ENCODE measurements at regions of chr1 and their contacts with region 1.

Region 1: GRCh38 chr1:203340112-203340804 is 10.7 kb downstream of the FMOD start:
- DNase-seq: peak; percentile 61 to 68 (median 63)
- H3K4me3 ChIP-seq: no peak overlapping the region
- H3K4me3 Mint-ChIP-seq: peak overlapping the region in 1 of 8 donors; percentile 6
- H3K27ac ChIP-seq: no peak overlapping the region
- H3K27ac Mint-ChIP-seq: peak overlapping the region in 6 of 7 donors; percentile 1 to 78 (median 48)
- H3K4me1 ChIP-seq: peaks cover 16% of the 10 kb centered on the region
- H3K4me1 Mint-ChIP-seq: peaks cover 23 to 36% (median 28%) of the 10 kb centered on the region in 4 donors
- H3K27me3 ChIP-seq: peaks cover 8% of the 10 kb centered on the region
- H3K27me3 Mint-ChIP-seq: peaks cover 4 to 26% of the 10 kb centered on the region in 2 donors

Region 2: DNA sequence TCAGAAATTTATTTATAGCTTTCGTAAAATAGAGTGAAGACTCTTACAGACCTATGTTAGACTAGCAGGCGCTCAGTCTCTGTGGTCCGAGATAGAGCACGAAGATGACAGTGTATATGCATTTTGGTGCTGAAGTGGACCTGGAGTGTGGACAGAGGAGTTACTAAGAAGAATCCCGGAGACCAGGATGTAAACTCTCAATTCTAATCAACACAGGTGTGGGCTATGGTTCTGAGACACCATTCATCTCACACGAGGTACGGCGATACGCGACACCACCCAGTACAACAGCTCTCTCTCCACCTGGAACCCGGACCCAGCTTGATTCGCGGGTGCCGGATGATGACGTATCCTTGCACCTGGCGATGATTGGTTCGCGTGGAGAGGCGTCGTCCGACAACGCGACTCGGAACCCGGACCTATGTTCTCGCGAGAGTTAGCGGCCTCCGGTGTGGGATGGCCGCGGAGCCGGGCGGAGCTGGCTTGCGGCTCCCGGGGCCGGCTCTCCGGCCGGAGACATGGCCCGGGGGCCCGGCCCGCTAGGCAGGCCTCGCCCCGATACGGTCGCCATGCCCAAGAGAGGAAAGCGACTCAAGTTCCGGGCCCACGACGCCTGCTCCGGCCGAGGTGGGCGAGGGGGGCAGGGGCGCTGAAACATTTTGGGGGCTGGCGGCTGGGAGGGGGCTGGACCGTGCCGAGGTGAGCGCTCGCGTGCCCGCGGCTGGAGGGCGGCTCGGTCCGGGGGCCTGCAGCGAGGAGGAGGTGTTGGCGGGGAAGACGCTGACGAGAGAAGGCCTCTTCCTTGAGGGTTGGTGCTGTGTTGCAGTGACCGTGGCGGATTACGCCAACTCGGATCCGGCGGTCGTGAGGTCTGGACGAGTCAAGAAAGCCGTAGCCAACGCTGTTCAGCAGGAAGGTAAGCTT is 333.0 kb before region 1 on chr1 and contains the start of gene TMEM183A:
- CTCF ChIA-PET with region 1: no interaction called
- POLR2A ChIA-PET with region 1: no interaction called
- intact Hi-C with region 1: no loop called
- DNase-seq: peak; percentile 92 to 96 (median 93)
- H3K4me3 ChIP-seq: peak within 1 kb of the TSS; percentile 75 to 97
- H3K4me3 Mint-ChIP-seq: peak within 1 kb of the TSS; percentile 91 to 99 (median 94)
- H3K27ac ChIP-seq: peak within 1 kb of the TSS; percentile 93
- H3K27ac Mint-ChIP-seq: peak within 1 kb of the TSS; percentile 97 to 99 (median 98)
- H3K4me1 ChIP-seq: peaks cover 32% of the 10 kb centered on the region
- H3K4me1 Mint-ChIP-seq: peaks cover 18 to 46% (median 33%) of the 10 kb centered on the region in 4 donors
- H3K27me3 ChIP-seq: no peaks in the 10 kb centered on the region
- H3K27me3 Mint-ChIP-seq: no peaks in the 10 kb centered on the region
- total RNA-seq, gene TMEM183A: 69.3 to 70.3 TPM

Region 3: DNA sequence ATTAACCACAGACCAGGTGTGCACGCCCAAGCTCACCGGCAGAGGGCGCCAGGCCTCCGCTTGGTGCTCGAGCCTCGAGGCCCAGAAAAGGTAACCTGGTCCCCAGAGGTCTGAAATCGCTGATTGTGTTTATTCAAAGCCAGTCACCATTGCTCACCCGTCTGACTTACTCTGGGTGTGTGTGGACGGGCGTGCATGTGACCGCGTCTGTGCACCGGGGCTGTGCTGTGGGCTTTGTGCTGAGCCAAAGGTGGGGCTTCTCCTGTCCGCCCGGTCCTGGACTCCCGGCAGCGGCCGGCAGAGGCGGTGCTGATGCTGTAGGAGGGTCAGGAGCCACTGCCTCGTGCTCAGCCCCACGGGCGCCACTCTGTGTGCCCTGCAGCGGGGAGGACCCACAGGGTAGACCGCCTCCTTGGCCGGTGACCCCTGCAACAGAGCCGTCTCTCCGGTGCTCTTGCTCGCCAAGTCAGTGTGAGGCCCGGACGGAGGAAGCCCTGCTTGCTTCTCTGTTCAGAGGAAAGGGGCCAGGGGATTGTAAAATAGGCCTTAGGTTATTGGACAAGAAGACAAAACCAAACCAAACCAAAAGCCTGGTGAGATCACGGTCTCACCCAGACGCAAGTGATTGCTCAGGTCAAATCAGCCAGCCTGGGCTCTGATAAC is 66.9 kb before region 1 on chr1:
- CTCF ChIA-PET with region 1: interaction called, 921 read pairs
- POLR2A ChIA-PET with region 1: interaction called, 145 read pairs
- intact Hi-C with region 1: loop called (anchors 1 kb)
- DNase-seq: peak; percentile 88 to 91 (median 89)
- H3K4me3 ChIP-seq: peak overlapping the region in 1 of 2 donors; percentile 27
- H3K4me3 Mint-ChIP-seq: peak overlapping the region; percentile 39 to 74 (median 66)
- H3K27ac ChIP-seq: peak overlapping the region; percentile 46
- H3K27ac Mint-ChIP-seq: peak overlapping the region; percentile 40 to 94 (median 86)
- H3K4me1 ChIP-seq: peaks cover 62% of the 10 kb centered on the region
- H3K4me1 Mint-ChIP-seq: peaks cover 22 to 60% (median 44%) of the 10 kb centered on the region in 4 donors
- H3K27me3 ChIP-seq: no peaks in the 10 kb centered on the region
- H3K27me3 Mint-ChIP-seq: no peaks in the 10 kb centered on the region

Region 4: DNA sequence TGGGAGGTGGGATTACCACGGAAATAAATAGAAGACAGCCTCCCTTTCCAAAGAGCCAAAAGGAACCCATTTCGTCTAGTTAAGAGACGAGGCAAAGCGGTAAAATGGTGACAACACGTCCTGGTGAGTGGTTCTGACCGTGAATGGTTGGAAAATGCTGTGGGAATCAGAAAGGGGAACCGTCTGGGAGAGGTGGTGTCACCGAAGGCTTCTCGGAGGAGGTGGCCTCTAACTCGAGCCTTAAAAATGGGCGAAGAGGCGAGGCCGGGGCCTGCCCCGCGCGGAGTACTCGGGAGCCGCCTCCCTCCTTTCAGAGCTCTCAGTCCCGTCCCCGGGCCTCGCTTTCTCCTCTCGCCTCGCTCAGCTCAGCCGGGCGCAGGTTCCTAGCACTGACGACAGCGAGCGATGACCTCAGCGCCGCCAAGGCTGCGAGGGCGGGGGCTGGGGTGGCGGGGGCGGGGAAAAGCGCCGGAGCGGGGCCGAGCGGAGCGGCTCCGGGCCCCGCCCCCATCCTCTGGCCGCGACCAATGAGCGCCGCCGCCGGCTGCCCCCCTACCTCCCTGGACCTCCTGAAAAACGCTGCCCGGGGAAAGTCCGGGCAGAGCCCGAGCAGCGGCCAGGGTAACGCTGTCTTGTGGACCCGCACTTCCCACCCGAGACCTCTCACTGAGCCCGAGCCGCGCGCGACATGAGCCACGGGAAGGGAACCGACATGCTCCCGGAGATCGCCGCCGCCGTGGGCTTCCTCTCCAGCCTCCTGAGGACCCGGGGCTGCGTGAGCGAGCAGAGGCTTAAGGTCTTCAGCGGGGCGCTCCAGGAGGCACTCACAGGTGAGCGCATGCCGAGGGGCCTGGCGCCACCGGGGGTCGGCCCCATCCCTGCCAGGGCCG is 35.1 kb before region 1 on chr1 and contains the start of gene BTG2:
- CTCF ChIA-PET with region 1: interaction called, 243 read pairs
- POLR2A ChIA-PET with region 1: interaction called, 3 read pairs
- intact Hi-C with region 1: loop called (anchors 1 kb)
- DNase-seq: peak; percentile 90 to 94 (median 91)
- H3K4me3 ChIP-seq: peak within 1 kb of the TSS; percentile 87 to 95
- H3K4me3 Mint-ChIP-seq: peak within 1 kb of the TSS; percentile 90 to 99 (median 98)
- H3K27ac ChIP-seq: peak within 1 kb of the TSS; percentile 100
- H3K27ac Mint-ChIP-seq: peak within 1 kb of the TSS; percentile 97 to 100 (median 99)
- H3K4me1 ChIP-seq: peaks cover 50% of the 10 kb centered on the region
- H3K4me1 Mint-ChIP-seq: peaks cover 48 to 82% (median 57%) of the 10 kb centered on the region in 4 donors
- H3K27me3 ChIP-seq: no peaks in the 10 kb centered on the region
- H3K27me3 Mint-ChIP-seq: no peaks in the 10 kb centered on the region
- total RNA-seq, gene BTG2: 197 to 201 TPM

Region 5: DNA sequence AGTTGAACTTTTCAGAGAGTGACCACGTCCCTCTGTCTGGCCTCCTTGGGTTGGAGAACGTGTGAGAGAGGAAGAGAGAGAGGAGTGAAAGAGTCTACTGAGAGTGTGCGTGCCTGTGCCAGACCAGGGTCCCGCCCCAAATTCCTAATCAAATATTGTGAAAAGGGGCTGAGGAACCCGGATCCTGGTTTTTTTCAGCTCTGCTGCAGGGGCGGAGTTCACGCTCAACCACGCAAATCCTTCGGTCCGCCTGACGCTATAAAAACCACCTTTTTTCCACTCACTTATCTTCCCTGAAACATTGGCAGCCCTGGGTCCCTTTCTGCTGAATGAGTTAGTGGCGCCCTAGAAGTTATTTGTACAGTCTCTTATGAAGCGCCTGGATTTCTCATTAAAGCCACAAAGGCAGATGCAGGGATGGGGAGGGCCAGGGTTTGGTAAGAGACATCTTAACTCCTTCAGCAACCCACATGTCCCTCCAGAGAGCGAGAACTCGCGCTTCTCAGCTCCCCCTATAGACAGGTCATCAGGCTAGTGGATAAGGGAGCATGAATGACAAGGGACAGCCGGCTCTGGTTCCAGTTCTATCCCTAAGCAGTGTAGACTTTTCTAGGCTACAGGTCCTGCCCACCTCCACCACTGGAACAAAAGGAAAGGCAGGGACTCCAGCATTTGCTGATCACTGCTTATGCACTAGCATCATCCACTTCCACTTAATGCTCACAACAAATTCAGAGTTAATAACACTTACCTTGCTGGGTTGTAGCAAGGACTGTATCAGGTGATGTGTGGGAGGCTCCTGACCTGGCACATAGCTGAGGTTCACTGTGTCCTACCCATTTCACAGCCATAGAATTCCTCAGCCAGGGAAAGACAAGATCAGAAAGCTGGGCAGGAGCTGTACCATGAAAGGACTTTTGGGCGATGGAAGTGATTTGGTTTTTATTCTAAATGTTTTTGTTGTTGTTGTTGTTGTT is 11.1 kb after region 1 on chr1 and contains the start of gene FMOD:
- CTCF ChIA-PET with region 1: interaction called, 30 read pairs
- POLR2A ChIA-PET with region 1: no interaction called
- intact Hi-C with region 1: no loop called
- DNase-seq: no peak
- H3K4me3 ChIP-seq: no peak within 1 kb of the TSS
- H3K4me3 Mint-ChIP-seq: peak within 1 kb of the TSS in 5 of 8 donors; percentile 13 to 45 (median 31)
- H3K27ac ChIP-seq: no peak within 1 kb of the TSS
- H3K27ac Mint-ChIP-seq: peak within 1 kb of the TSS in 1 of 7 donors; percentile 57
- H3K4me1 ChIP-seq: no peaks in the 10 kb centered on the region
- H3K4me1 Mint-ChIP-seq: peaks cover 0 to 4% (median 1%) of the 10 kb centered on the region in 4 donors
- H3K27me3 ChIP-seq: no peaks in the 10 kb centered on the region
- H3K27me3 Mint-ChIP-seq: peaks cover 23 to 50% of the 10 kb centered on the region in 2 donors
- total RNA-seq, gene FMOD: not detected

Region 6: DNA sequence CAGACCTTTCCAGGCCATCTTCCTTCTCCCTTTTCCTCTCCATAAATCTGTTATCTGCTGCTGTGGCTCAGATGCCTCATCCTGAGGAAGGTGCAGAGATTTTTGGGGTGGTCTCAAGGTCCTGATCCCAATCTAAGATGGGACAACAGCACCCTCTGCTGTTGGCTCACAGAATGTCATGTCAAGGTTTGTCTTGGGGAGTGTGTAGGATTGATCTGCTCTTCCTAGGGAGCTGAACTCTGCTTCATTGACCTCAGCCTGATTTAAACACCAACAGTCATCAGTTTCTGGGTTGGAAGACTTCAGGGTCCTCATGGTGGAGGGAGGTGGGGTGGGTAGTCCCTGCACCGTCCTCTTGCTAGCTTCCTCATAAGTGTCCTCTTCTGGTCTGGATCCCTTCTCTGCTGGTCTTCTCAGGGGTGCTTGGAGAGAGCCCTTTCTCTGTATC is 361.9 kb after region 1 on chr1:
- CTCF ChIA-PET with region 1: interaction called, 8 read pairs
- POLR2A ChIA-PET with region 1: no interaction called
- intact Hi-C with region 1: loop called (anchors 1 kb)
- DNase-seq: peak; percentile 46 to 68 (median 57)
- H3K4me3 ChIP-seq: no peak overlapping the region
- H3K4me3 Mint-ChIP-seq: no peak overlapping the region
- H3K27ac ChIP-seq: no peak overlapping the region
- H3K27ac Mint-ChIP-seq: peak overlapping the region; percentile 26 to 97 (median 89)
- H3K4me1 ChIP-seq: peaks cover 3% of the 10 kb centered on the region
- H3K4me1 Mint-ChIP-seq: peaks cover 5 to 15% (median 10%) of the 10 kb centered on the region in 4 donors
- H3K27me3 ChIP-seq: no peaks in the 10 kb centered on the region
- H3K27me3 Mint-ChIP-seq: no peaks in the 10 kb centered on the region